PC-3 (cell line): ENCODE measurements at regions of chr13 and their contacts with region 1.

Region 1: DNA sequence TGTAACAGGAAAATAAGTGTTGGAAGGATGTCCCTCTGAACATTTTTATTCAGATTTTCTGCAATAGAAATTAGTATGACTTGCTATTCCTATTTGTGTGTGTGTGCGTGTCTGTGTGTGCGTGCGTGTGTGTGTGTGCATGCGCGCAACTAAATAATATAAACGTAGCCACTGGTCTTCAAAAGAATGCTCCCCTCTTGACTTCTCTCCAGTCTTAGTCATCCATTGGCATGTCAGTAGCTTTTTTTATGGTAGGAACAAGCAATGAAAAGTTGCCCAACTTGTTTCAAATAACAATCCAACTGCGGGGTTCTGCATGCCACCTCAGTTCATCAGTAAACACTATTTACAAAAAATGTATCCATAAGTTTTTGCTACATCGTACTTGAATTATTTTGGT is 249.6 kb downstream of the GPC6 start:
- DNase-seq: peak; percentile 82
- ATAC-seq: peak; percentile 48
- H3K4me3 ChIP-seq: peak overlapping the region; percentile 44; the same call in 1 of the 2 replicates
- H3K27ac ChIP-seq: peak overlapping the region; percentile 32; the same call in 1 of the 2 replicates
- H3K4me1 ChIP-seq: peaks cover 29% of the 10 kb centered on the region
- H3K27me3 ChIP-seq: no peaks in the 10 kb centered on the region
- CTCF ChIP-seq: no peak

Region 2: DNA sequence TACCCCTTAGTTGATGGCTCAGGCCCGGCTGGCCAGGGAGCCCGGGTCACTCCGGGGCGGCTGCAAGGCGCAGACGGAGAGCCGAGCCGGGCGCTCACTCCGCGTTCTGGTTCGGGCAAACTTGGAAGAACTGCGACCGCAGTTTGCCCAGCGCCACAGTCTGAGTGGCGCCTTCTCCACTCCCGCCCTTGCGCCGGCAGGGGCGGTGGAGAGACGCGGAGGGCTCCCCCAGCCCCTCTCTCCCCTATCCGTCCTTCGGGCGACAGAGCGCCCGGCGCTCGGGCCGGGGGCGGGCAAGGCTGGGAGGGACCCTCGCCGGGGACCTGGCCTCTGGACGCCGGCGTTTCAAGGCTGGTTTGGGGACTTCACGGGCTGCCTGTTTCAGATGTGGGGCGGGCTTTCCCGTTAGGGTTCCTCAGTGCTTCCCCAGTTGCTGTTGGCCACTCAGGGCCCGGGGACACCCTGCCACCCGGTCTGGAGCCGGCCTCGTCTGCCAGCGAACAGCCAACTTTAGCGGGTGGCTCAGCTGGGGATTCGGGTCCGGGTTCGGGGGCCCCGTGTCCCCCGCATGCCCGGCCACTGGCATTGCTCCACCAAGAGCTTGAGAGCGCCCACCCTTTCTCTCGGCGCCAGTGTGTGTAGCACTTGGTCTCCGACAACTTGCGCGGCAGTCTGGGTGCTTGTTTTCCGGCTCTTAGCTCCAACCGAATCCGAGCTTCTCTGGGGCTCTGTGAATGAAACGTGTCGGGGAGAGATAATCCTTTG is 248.1 kb before region 1 on chr13:
- CTCF ChIA-PET with region 1: no interaction called
- POLR2A ChIA-PET with region 1: no interaction called
- intact Hi-C with region 1: loop called (anchors 1 kb)
- DNase-seq: peak; percentile 64
- ATAC-seq: peak; percentile 65
- H3K4me3 ChIP-seq: peak overlapping the region; percentile 88
- H3K27ac ChIP-seq: no peak overlapping the region
- H3K4me1 ChIP-seq: peaks cover 43% of the 10 kb centered on the region
- H3K27me3 ChIP-seq: no peaks in the 10 kb centered on the region
- CTCF ChIP-seq: peak; percentile 37; the same call in 1 of the 2 replicates

Region 3: GRCh38 chr13:93603043-93603442 is 126.9 kb after region 1 on chr13:
- CTCF ChIA-PET with region 1: no interaction called
- POLR2A ChIA-PET with region 1: no interaction called
- intact Hi-C with region 1: loop called (anchors 5 kb)
- DNase-seq: peak; percentile 90
- ATAC-seq: peak; percentile 100
- H3K4me3 ChIP-seq: no peak overlapping the region
- H3K27ac ChIP-seq: peak overlapping the region; percentile 49
- H3K4me1 ChIP-seq: peaks cover 18% of the 10 kb centered on the region
- H3K27me3 ChIP-seq: no peaks in the 10 kb centered on the region
- CTCF ChIP-seq: no peak

Region 4: GRCh38 chr13:93635616-93636032 is 159.4 kb after region 1 on chr13:
- CTCF ChIA-PET with region 1: no interaction called
- POLR2A ChIA-PET with region 1: no interaction called
- intact Hi-C with region 1: no loop called
- DNase-seq: no peak
- ATAC-seq: no peak
- H3K4me3 ChIP-seq: no peak overlapping the region
- H3K27ac ChIP-seq: no peak overlapping the region
- H3K4me1 ChIP-seq: no peaks in the 10 kb centered on the region
- H3K27me3 ChIP-seq: no peaks in the 10 kb centered on the region
- CTCF ChIP-seq: no peak

Region 5: GRCh38 chr13:93690139-93690538 is 214.0 kb after region 1 on chr13:
- CTCF ChIA-PET with region 1: no interaction called
- POLR2A ChIA-PET with region 1: no interaction called
- intact Hi-C with region 1: no loop called
- DNase-seq: peak; percentile 31
- ATAC-seq: no peak
- H3K4me3 ChIP-seq: no peak overlapping the region
- H3K27ac ChIP-seq: no peak overlapping the region
- H3K4me1 ChIP-seq: no peaks in the 10 kb centered on the region
- H3K27me3 ChIP-seq: no peaks in the 10 kb centered on the region
- CTCF ChIP-seq: no peak

Region 6: DNA sequence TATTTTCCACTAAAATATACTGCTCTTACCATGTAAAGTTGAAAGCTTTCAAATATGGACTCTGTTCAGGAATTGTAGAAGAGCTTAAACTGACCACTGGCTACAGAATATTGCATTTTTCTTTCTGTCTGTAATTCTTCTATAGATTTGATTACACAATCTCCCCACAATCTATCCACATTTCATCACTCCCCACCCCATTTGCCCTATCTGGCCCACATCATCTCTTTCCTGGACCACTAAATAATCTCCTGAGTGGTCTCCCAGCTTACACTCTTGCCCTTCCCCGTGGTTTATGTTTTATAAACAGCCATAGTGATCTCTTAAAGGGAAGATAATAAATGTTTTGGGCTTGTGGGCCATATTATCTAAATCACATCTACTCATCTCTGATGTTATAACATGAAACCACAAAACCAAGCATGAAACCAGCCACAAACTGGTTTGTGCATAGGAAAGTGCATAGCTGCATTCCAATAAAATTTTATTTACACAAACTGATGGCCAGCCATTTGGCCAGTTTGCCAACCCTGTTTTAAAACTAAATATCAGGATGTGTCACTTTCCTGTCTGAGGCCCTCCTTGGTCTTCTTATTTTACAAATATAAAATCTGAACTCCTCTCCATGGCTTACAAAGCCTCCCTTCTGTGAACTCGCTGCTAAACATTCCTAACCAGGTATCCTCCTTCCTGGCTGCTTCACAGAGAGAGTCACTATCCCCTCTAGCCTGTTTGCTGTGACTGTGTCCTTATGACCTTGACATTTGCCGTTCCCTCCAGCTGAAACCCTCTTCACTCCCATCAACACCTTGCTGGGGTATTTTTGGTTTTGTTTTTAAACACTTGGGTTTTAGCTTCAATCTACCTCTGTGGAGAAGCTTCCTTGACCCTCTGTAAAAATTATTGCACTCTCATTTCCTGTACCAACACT is 251.3 kb after region 1 on chr13:
- CTCF ChIA-PET with region 1: no interaction called
- POLR2A ChIA-PET with region 1: no interaction called
- intact Hi-C with region 1: loop called (anchors 5 kb)
- DNase-seq: peak; percentile 85
- ATAC-seq: peak; percentile 83
- H3K4me3 ChIP-seq: no peak overlapping the region
- H3K27ac ChIP-seq: peak overlapping the region; percentile 76
- H3K4me1 ChIP-seq: peaks cover 24% of the 10 kb centered on the region
- H3K27me3 ChIP-seq: no peaks in the 10 kb centered on the region
- CTCF ChIP-seq: no peak